Body of pancreas (tissue), 4 donors: ENCODE measurements at regions of chr3 and their contacts with region 1.

Region 1: DNA sequence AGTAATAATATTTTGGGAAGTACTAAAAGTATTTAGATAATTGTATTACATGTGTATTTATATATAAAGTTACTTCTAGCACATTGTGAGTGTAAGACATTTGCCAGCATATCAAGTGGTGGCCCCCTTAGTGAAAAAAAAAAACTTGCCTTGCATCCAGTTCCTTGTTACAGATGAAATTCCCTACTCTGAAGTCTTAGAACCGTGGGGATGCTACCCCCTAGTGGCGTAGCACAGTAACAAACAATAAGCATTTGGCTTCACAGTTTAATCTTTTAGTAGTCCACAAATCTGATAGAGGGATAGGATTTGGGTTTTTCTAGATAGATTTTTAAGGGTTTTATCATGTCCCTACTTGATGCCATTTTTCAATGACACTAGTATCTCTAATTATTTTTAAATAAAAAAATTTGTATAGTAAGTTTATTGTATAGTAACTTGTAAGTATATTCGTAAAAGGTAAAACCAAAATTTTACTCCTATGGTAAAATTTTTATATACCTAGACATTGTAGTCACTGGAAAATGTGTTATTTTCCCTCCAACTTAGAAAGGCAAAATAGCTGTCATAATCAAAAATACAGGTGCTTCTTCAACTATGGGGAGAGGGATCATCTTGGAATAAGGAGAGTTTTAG is 14.3 kb downstream of the SMC4 start:
- DNase-seq: peak; percentile 61 to 71 (median 64)
- ATAC-seq: peak; percentile 82
- H3K4me3 ChIP-seq: no peak overlapping the region
- H3K27ac ChIP-seq: no peak overlapping the region
- H3K4me1 ChIP-seq: no peaks in the 10 kb centered on the region
- H3K27me3 ChIP-seq: no peaks in the 10 kb centered on the region
- CTCF ChIP-seq: peak; percentile 71 to 93 (median 83)
- POLR2A ChIP-seq: no peak

Region 2: GRCh38 chr3:160038862-160039562 is 374.7 kb before region 1 on chr3:
- intact Hi-C with region 1: loop called (anchors 10 kb)
- DNase-seq: peak; percentile 38 to 72 (median 50)
- ATAC-seq: no peak
- H3K4me3 ChIP-seq: no peak overlapping the region
- H3K27ac ChIP-seq: no peak overlapping the region
- H3K4me1 ChIP-seq: peaks cover 7% of the 10 kb centered on the region
- H3K27me3 ChIP-seq: no peaks in the 10 kb centered on the region
- CTCF ChIP-seq: no peak
- POLR2A ChIP-seq: no peak

Region 3: GRCh38 chr3:160163229-160163878 is 250.4 kb before region 1 on chr3:
- intact Hi-C with region 1: loop called (anchors 10 kb)
- DNase-seq: peak in 1 of 4 donors; percentile 11
- ATAC-seq: no peak
- H3K4me3 ChIP-seq: no peak overlapping the region
- H3K27ac ChIP-seq: no peak overlapping the region
- H3K4me1 ChIP-seq: no peaks in the 10 kb centered on the region
- H3K27me3 ChIP-seq: no peaks in the 10 kb centered on the region
- CTCF ChIP-seq: peak in 6 of 7 experiments; percentile 26 to 58 (median 54)
- POLR2A ChIP-seq: no peak